ENCODE measurements at regions of chr3 and their contacts with region 1.

Region 1: GRCh38 chr3:134464064-134464697 is 21.6 kb downstream of the ANAPC13 start:
- DNase-seq: peak; percentile 88 to 91
- ATAC-seq: peak; percentile 87
- H3K4me3 ChIP-seq: no peak overlapping the region
- H3K27ac ChIP-seq: peak overlapping the region in 1 of 2 donors; percentile 89
- H3K4me1 ChIP-seq: peaks cover 2 to 9% of the 10 kb centered on the region in 2 donors
- H3K27me3 ChIP-seq: no peaks in the 10 kb centered on the region

Region 2: GRCh38 chr3:134308350-134308891 is 155.8 kb before region 1 on chr3:
- intact Hi-C with region 1: loop called in 1 of 2 experiments (anchors 1 kb)
- DNase-seq: peak; percentile 87 to 91
- ATAC-seq: peak; percentile 91
- H3K4me3 ChIP-seq: no peak overlapping the region
- H3K27ac ChIP-seq: peak overlapping the region; percentile 30 to 58
- H3K4me1 ChIP-seq: no peaks in the 10 kb centered on the region
- H3K27me3 ChIP-seq: no peaks in the 10 kb centered on the region

Region 3: DNA sequence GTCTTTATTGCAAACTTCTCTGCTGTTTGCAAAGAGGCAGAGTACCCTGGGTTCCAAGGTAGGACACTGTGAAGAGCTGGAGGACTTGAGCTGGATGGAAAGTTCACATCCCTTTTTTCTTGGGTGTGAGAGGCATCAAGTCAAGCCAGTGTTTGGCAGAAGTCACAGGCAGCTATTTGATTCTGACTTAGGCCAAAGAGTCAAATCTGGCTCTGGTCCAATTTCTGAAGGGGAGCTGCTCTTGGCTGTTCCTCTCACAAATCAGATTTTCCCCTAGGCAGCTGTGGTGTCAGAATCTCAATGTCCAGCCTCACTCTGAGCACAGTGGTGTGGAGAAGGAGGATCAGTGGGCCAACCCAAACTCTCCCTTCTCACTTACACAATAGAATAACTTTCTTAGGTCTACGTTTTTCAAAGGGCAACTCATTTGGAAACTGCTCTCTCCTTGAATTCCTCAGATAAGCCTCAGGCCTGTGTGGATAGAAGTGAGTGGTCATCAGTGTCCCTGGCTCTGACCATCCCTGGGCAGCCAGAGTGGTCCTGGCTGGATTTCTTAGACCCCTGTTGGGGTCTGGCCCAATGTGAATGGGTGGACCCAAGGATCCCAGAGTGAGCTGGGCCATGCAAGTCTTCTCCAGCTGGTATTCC is 71.7 kb before region 1 on chr3:
- intact Hi-C with region 1: loop called (anchors 5 kb)
- DNase-seq: no peak
- ATAC-seq: peak; percentile 71
- H3K4me3 ChIP-seq: no peak overlapping the region
- H3K27ac ChIP-seq: peak overlapping the region; percentile 69 to 90
- H3K4me1 ChIP-seq: peaks cover 4 to 8% of the 10 kb centered on the region in 2 donors
- H3K27me3 ChIP-seq: no peaks in the 10 kb centered on the region

Region 4: GRCh38 chr3:134406331-134407238 is 57.6 kb before region 1 on chr3:
- intact Hi-C with region 1: no loop called
- DNase-seq: peak in 1 of 2 donors; percentile 76
- ATAC-seq: peak; percentile 63
- H3K4me3 ChIP-seq: peak overlapping the region; percentile 19 to 32
- H3K27ac ChIP-seq: no peak overlapping the region
- H3K4me1 ChIP-seq: no peaks in the 10 kb centered on the region
- H3K27me3 ChIP-seq: no peaks in the 10 kb centered on the region

Region 5: GRCh38 chr3:134485718-134486576 is 21.8 kb after region 1 on chr3 and contains the starts of genes ANAPC13 and CEP63:
- intact Hi-C with region 1: loop called in 1 of 2 experiments (anchors 1 kb)
- DNase-seq: peak; percentile 94 to 96
- ATAC-seq: peak; percentile 97
- H3K4me3 ChIP-seq: peak within 1 kb of the TSS; percentile 72 to 87
- H3K27ac ChIP-seq: peak within 1 kb of the TSS; percentile 89 to 97
- H3K4me1 ChIP-seq: peaks cover 0 to 2% of the 10 kb centered on the region in 2 donors
- H3K27me3 ChIP-seq: no peaks in the 10 kb centered on the region
- total RNA-seq, gene ANAPC13: 38.7 to 40.5 TPM
- total RNA-seq, gene CEP63: 28.0 to 29.7 TPM

Region 6: DNA sequence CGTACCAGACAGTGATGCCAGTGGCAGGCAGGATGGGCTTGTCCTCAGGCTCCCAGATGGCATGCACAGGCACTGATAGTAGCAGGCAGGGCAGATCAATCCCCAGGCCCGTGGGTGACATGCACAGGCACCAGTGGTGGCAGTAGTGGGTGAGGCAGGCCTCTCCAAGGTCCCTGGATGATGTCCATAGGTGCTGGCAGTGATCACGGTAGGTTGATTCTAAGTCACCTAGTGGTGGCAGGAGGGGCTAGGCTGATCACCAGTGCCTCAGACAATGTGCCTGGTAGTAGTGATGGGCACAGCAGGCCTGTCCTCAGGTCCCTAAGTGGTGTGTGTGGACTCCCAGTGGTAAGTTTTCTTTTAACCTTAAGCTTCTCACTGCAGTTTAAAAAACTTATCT is 41.3 kb after region 1 on chr3:
- intact Hi-C with region 1: no loop called
- DNase-seq: no peak
- ATAC-seq: no peak
- H3K4me3 ChIP-seq: no peak overlapping the region
- H3K27ac ChIP-seq: no peak overlapping the region
- H3K4me1 ChIP-seq: no peaks in the 10 kb centered on the region
- H3K27me3 ChIP-seq: no peaks in the 10 kb centered on the region

Measured in aorta (tissue), 5 donors.